Transverse colon (tissue), 4 donors: ENCODE measurements at regions of chr16 and their contacts with region 1.

Region 1: DNA sequence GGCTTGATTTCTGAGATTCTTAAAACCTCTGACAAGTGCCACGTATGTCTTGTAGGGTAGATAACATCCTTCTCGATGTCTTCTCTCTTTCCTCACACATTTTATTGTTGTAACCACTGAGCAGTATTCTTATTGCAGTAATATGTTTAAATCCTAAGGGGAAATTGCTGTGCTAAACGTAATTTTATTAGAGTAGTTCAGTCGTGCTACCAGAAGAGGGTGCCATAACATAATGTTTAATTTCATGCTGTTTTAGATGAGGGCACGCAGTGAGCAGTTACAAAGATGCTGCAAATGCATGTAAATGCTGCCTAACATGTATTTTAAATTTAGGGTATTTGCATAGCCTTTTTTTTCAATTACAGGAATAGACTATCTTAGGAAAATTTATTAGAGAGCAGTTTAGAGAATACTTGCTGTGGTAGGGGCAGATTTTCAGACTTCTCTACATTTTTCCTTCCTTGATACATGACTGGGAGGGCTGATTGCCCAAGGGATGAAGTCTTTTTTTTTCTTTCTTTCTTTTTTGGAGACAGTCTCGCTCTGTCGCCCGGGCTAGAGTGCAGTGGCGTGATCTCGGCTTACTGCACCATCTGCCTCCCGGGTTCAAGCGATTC is 51.7 kb downstream of the GAN start:
- DNase-seq: no peak
- H3K4me3 ChIP-seq: no peak overlapping the region
- H3K27ac ChIP-seq: no peak overlapping the region
- H3K4me1 ChIP-seq: no peaks in the 10 kb centered on the region
- H3K27me3 ChIP-seq: no peaks in the 10 kb centered on the region
- CTCF ChIP-seq: peak; percentile 55 to 78 (median 66)
- EP300 ChIP-seq: no peak
- POLR2A ChIP-seq: no peak

Region 2: GRCh38 chr16:81885976-81886586 is 519.7 kb after region 1 on chr16:
- in situ Hi-C with region 1: loop called in 2 of 4 experiments (anchors 25 kb)
- intact Hi-C with region 1: no loop called
- DNase-seq: no peak
- H3K4me3 ChIP-seq: no peak overlapping the region
- H3K27ac ChIP-seq: no peak overlapping the region
- H3K4me1 ChIP-seq: no peaks in the 10 kb centered on the region
- H3K27me3 ChIP-seq: no peaks in the 10 kb centered on the region
- CTCF ChIP-seq: peak; percentile 43 to 68 (median 51)
- EP300 ChIP-seq: no peak
- POLR2A ChIP-seq: no peak